ENCODE measurements at regions of chr9 and their contacts with region 1.

Region 1: GRCh38 chr9:33473643-33474352 is at the start of gene NOL6:
- DNase-seq: peak; percentile 97 to 99 (median 98)
- ATAC-seq: peak; percentile 99
- H3K4me3 ChIP-seq: peak within 1 kb of the TSS; percentile 91 to 94
- H3K4me3 Mint-ChIP-seq: peak within 1 kb of the TSS; percentile 99
- H3K27ac ChIP-seq: peak within 1 kb of the TSS; percentile 76 to 80
- H3K27ac Mint-ChIP-seq: peak within 1 kb of the TSS; percentile 96
- H3K4me1 ChIP-seq: peaks cover 22% of the 10 kb centered on the region
- H3K4me1 Mint-ChIP-seq: peaks cover 32% of the 10 kb centered on the region
- H3K27me3 ChIP-seq: no peaks in the 10 kb centered on the region
- H3K27me3 Mint-ChIP-seq: no peaks in the 10 kb centered on the region
- CTCF ChIP-seq: no peak
- total RNA-seq, gene NOL6: 41.8 to 42.3 TPM

Region 2: DNA sequence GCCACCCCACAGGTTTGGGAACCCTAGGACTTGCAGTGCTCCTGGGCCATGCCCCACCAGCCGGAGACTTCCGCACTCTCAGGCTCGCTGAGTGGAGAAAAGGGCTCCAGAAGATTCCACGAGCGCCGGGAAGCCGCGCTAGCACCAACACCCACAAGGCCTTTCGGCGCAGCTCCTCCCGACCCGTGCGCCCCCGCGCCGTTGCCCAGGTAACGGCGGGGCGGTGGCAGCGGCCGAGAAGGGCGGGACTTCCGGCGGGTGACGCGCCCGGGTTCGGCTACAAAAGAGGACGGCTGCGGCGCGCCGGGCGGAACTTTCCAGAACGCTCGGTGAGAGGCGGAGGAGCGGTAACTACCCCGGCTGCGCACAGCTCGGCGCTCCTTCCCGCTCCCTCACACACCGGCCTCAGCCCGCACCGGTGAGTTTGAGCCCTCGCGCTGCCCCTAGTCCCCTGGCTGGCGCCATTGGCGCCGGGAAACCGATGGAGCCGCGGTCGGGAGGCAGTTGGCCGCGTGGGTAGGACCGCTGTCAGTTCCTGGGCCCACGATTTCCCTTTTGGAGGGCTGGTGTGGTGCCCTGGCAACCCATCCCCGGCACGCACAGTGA is 448.7 kb before region 1 on chr9 and contains the start of gene DNAJA1:
- CTCF ChIA-PET with region 1: no interaction called
- POLR2A ChIA-PET with region 1: interaction called, 4 read pairs
- intact Hi-C with region 1: loop called in 1 of 2 experiments (anchors 10 kb)
- DNase-seq: peak; percentile 92 to 98 (median 96)
- ATAC-seq: peak; percentile 80
- H3K4me3 ChIP-seq: peak within 1 kb of the TSS; percentile 100
- H3K4me3 Mint-ChIP-seq: peak within 1 kb of the TSS; percentile 96
- H3K27ac ChIP-seq: peak within 1 kb of the TSS; percentile 100
- H3K27ac Mint-ChIP-seq: peak within 1 kb of the TSS; percentile 96
- H3K4me1 ChIP-seq: peaks cover 63% of the 10 kb centered on the region
- H3K4me1 Mint-ChIP-seq: peaks cover 70% of the 10 kb centered on the region
- H3K27me3 ChIP-seq: no peaks in the 10 kb centered on the region
- H3K27me3 Mint-ChIP-seq: no peaks in the 10 kb centered on the region
- CTCF ChIP-seq: no peak
- total RNA-seq, gene DNAJA1: 170 to 172 TPM

Region 3: GRCh38 chr9:33264473-33265177 is 209.2 kb before region 1 on chr9 and contains the starts of genes BAG1 and CHMP5:
- CTCF ChIA-PET with region 1: no interaction called
- POLR2A ChIA-PET with region 1: no interaction called
- intact Hi-C with region 1: loop called (anchors 2 kb)
- DNase-seq: peak; percentile 99 to 100 (median 100)
- ATAC-seq: peak; percentile 97
- H3K4me3 ChIP-seq: peak within 1 kb of the TSS; percentile 69 to 98
- H3K4me3 Mint-ChIP-seq: peak within 1 kb of the TSS; percentile 96
- H3K27ac ChIP-seq: peak within 1 kb of the TSS; percentile 74 to 94
- H3K27ac Mint-ChIP-seq: peak within 1 kb of the TSS; percentile 97
- H3K4me1 ChIP-seq: peaks cover 21% of the 10 kb centered on the region
- H3K4me1 Mint-ChIP-seq: peaks cover 62% of the 10 kb centered on the region
- H3K27me3 ChIP-seq: no peaks in the 10 kb centered on the region
- H3K27me3 Mint-ChIP-seq: no peaks in the 10 kb centered on the region
- CTCF ChIP-seq: no peak
- total RNA-seq, gene BAG1: 56.8 to 64.3 TPM
- total RNA-seq, gene CHMP5: 13.4 to 14.2 TPM

Region 4: DNA sequence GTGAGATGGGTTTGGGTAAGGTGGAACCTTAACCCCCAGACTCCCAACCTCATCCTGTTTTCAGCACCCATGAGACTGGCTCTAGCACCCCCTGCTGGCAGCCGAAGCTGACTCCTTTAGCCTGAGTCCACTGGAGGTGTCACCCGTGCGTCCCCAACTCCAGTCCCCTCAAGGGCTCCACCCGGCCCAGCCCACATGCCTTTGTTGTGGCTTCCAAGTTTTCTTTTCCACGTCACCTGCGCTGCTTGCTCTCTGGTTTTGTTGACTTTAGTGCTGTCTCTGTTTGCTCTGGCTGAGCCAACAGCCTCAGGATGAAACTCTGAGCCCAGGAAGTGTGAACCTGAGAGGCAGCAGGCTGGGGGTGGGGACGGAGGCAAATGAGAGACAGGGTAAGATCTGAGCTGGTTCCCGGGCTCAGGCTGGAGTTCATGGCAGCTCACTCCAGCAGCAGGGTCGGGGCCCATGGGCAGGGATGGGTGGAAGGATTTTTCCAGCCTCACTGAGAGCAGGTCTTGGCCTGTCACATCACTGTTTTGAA is 58.2 kb before region 1 on chr9:
- CTCF ChIA-PET with region 1: interaction called, 26 read pairs
- POLR2A ChIA-PET with region 1: interaction called, 12 read pairs
- intact Hi-C with region 1: no loop called
- DNase-seq: peak; percentile 83 to 97 (median 93)
- ATAC-seq: peak; percentile 88
- H3K4me3 ChIP-seq: peak overlapping the region in 1 of 2 experiments; percentile 7
- H3K4me3 Mint-ChIP-seq: peak overlapping the region; percentile 72
- H3K27ac ChIP-seq: peak overlapping the region; percentile 34 to 41
- H3K27ac Mint-ChIP-seq: peak overlapping the region; percentile 95
- H3K4me1 ChIP-seq: peaks cover 42% of the 10 kb centered on the region
- H3K4me1 Mint-ChIP-seq: peaks cover 50% of the 10 kb centered on the region
- H3K27me3 ChIP-seq: no peaks in the 10 kb centered on the region
- H3K27me3 Mint-ChIP-seq: no peaks in the 10 kb centered on the region
- CTCF ChIP-seq: peak; percentile 63

Region 5: GRCh38 chr9:33446946-33447798 is 26.6 kb before region 1 on chr9 and contains the start of gene AQP3:
- CTCF ChIA-PET with region 1: interaction called, 194 read pairs
- POLR2A ChIA-PET with region 1: interaction called, 33 read pairs
- intact Hi-C with region 1: loop called (anchors 1 kb)
- DNase-seq: peak; percentile 49 to 88 (median 76)
- ATAC-seq: peak; percentile 53
- H3K4me3 ChIP-seq: peak within 1 kb of the TSS; percentile 58 to 79
- H3K4me3 Mint-ChIP-seq: peak within 1 kb of the TSS; percentile 95
- H3K27ac ChIP-seq: peak within 1 kb of the TSS; percentile 62 to 81
- H3K27ac Mint-ChIP-seq: peak within 1 kb of the TSS; percentile 96
- H3K4me1 ChIP-seq: peaks cover 39% of the 10 kb centered on the region
- H3K4me1 Mint-ChIP-seq: peaks cover 52% of the 10 kb centered on the region
- H3K27me3 ChIP-seq: no peaks in the 10 kb centered on the region
- H3K27me3 Mint-ChIP-seq: no peaks in the 10 kb centered on the region
- CTCF ChIP-seq: no peak
- total RNA-seq, gene AQP3: 48.0 to 50.3 TPM

Region 6: DNA sequence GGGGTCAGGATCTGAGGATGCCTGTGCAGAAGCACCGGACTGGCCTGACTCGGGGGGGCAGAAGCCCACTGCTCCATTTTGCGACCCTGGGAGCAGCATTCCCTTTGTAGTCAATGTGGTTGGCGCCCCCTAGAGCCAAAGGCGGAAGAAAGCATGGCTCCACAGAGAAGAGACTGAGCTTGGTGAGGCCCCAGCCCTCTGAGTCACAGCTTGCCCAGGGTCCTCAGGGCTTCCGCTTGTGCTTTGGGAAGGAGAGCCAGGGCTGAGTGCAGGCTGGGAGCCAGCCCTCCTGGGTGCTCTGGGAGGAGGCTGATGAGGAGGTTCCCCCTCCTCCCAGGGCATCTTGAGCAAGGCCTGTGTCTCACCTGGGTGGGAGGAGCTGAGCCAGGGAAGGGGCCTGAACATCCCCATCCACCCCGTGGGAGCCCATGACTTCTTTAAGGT is 20.9 kb before region 1 on chr9:
- CTCF ChIA-PET with region 1: interaction called, 194 read pairs
- POLR2A ChIA-PET with region 1: interaction called, 33 read pairs
- intact Hi-C with region 1: no loop called
- DNase-seq: peak in 8 of 9 experiments; percentile 32 to 67 (median 61)
- ATAC-seq: peak; percentile 70
- H3K4me3 ChIP-seq: no peak overlapping the region
- H3K4me3 Mint-ChIP-seq: no peak overlapping the region
- H3K27ac ChIP-seq: peak overlapping the region in 1 of 2 experiments; percentile 4
- H3K27ac Mint-ChIP-seq: peak overlapping the region; percentile 87
- H3K4me1 ChIP-seq: peaks cover 62% of the 10 kb centered on the region
- H3K4me1 Mint-ChIP-seq: peaks cover 62% of the 10 kb centered on the region
- H3K27me3 ChIP-seq: no peaks in the 10 kb centered on the region
- H3K27me3 Mint-ChIP-seq: no peaks in the 10 kb centered on the region
- CTCF ChIP-seq: peak; percentile 56

Region 7: GRCh38 chr9:33458444-33458843 is 15.4 kb before region 1 on chr9:
- CTCF ChIA-PET with region 1: interaction called, 194 read pairs
- POLR2A ChIA-PET with region 1: interaction called, 15 read pairs
- intact Hi-C with region 1: no loop called
- DNase-seq: peak in 8 of 9 experiments; percentile 53 to 80 (median 72)
- ATAC-seq: peak; percentile 84
- H3K4me3 ChIP-seq: no peak overlapping the region
- H3K4me3 Mint-ChIP-seq: peak overlapping the region; percentile 56
- H3K27ac ChIP-seq: peak overlapping the region; percentile 7 to 70
- H3K27ac Mint-ChIP-seq: peak overlapping the region; percentile 93
- H3K4me1 ChIP-seq: peaks cover 53% of the 10 kb centered on the region
- H3K4me1 Mint-ChIP-seq: peaks cover 51% of the 10 kb centered on the region
- H3K27me3 ChIP-seq: no peaks in the 10 kb centered on the region
- H3K27me3 Mint-ChIP-seq: no peaks in the 10 kb centered on the region
- CTCF ChIP-seq: no peak

Region 8: DNA sequence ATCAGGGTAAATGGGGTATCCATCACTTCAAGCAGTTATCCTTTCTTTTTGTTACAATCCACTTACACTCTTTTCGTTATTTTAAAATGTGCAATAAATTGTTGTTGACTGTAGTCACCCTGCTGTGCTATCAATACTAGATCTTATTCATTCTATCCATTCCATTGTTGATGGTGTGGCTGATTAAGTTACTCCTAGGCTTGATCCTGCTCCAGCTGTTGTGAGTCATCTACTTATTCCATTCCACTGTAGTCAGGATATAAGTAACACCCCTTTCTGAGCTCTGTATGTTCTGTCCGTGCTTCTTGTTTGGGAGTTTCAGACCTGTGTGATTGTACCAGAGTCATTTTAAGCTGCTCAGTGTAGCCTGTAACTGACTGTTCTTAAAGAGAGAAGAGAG is 1893.7 kb after region 1 on chr9:
- CTCF ChIA-PET with region 1: no interaction called
- POLR2A ChIA-PET with region 1: no interaction called
- intact Hi-C with region 1: no loop called
- DNase-seq: no peak
- ATAC-seq: no peak
- H3K4me3 ChIP-seq: no peak overlapping the region
- H3K4me3 Mint-ChIP-seq: no peak overlapping the region
- H3K27ac ChIP-seq: no peak overlapping the region
- H3K27ac Mint-ChIP-seq: no peak overlapping the region
- H3K4me1 ChIP-seq: no peaks in the 10 kb centered on the region
- H3K4me1 Mint-ChIP-seq: no peaks in the 10 kb centered on the region
- H3K27me3 ChIP-seq: no peaks in the 10 kb centered on the region
- H3K27me3 Mint-ChIP-seq: peaks cover 3% of the 10 kb centered on the region
- CTCF ChIP-seq: no peak

Measured in CD8-positive, alpha-beta T cell (primary cell).